Dendritic cell treated with granulocyte-macrophage colony-stimulating factor and Interleukin-4, amounts not matched to agents 40 ng/mL and 50 ng/mL, for 4 days (primary cell): ENCODE measurements at regions of chr9 and their contacts with region 1.

Region 1: DNA sequence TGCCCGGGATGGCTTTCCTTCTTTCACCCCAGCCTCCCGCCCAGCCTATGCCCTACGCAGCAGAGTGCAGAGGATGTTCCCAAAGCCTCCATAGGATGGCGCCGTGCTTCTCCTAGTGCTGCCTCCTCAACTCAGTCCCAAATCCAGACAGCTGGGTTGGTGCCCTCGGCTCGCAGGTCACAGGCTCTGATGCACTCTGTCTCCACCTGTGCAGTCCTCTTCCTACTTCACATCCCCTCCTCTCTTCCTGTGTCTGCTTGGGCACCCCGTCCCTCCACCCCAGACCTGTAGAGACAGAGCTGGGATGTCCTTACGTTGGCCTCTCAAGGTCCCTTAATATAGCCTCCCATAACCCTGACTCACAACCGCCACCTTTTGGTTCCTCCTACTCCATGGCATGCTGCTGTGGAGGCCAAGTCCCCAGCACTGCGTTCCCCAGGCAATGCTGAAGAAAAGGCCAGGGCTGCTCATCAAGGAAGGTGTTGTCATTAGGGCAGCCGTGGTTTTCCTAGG is 314.4 kb downstream of the GADD45G start:
- H3K4me3 Mint-ChIP-seq: no peak overlapping the region
- H3K27ac Mint-ChIP-seq: no peak overlapping the region
- H3K4me1 Mint-ChIP-seq: peaks cover 11% of the 10 kb centered on the region
- H3K27me3 Mint-ChIP-seq: peaks cover 20% of the 10 kb centered on the region

Region 2: DNA sequence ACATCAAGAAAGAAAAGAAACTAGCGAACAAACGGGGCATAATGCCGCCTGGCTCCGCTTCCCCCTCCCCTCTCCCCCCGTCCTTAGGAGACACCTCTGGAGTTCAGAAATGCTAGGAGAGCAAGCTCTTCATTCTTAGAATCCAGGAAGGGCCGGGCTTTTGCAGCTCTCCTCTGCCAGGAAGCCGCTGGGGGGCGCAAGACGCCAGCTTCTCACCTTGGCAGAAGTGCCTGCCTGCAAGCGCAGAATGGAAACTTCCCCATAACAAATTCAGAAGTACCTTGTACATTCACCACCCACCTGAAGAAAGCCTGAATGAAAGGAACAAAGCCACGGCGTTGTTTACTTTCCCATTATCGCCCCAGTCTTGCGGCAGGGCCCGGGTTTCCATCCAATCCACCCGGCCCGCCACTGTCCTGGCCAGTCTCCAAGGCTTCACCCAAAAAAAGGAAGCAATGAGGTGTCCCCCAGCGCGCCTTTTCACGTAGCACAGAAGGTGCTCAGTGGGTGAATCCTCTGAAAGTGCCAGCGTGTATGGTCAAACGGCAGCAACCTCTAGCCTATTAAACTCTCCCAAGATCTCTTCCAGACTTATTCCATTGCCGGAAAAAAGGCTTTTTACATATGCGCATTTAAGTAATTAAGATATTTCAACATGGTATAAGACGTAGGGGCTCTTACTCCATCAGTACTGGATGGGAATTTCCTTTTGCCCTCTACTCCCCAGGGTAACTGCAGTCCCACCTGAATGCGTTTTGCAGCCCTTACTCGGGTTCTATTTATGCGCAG is 316.1 kb before region 1 on chr9:
- intact Hi-C with region 1: loop called (anchors 1 kb)
- H3K4me3 Mint-ChIP-seq: peak overlapping the region; percentile 73
- H3K27ac Mint-ChIP-seq: peak overlapping the region; percentile 34
- H3K4me1 Mint-ChIP-seq: peaks cover 28% of the 10 kb centered on the region
- H3K27me3 Mint-ChIP-seq: peaks cover 11% of the 10 kb centered on the region

Region 3: GRCh38 chr9:89623925-89624420 is 295.3 kb before region 1 on chr9:
- intact Hi-C with region 1: loop called (anchors 5 kb)
- H3K4me3 Mint-ChIP-seq: no peak overlapping the region
- H3K27ac Mint-ChIP-seq: peak overlapping the region; percentile 81
- H3K4me1 Mint-ChIP-seq: peaks cover 44% of the 10 kb centered on the region
- H3K27me3 Mint-ChIP-seq: peaks cover 42% of the 10 kb centered on the region

Region 4: DNA sequence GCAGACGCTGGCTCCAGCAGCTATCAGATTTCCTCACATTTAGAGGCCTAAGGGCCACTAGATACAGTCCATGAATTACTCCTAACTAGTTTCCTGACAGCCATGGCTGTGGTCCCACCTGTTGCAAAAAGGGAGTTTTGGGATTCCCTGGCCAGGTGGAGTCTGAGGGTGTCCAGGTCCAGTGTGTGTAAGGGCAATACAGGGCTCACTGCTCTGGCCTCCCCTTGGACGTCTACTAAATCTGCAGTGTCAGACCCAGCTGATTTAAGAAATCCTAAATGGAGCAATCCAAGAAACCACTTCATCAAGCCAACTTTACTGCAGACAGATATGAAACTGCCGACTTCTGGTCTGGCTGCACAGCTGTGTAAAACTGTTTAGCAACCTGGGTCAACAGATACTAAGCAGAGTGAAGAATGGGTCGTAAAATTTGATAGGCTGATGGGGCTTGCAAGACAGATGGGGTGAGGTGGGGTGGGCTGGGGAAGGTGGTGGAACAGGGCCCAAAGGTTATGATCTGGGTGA is 198.0 kb before region 1 on chr9:
- intact Hi-C with region 1: no loop called
- H3K4me3 Mint-ChIP-seq: no peak overlapping the region
- H3K27ac Mint-ChIP-seq: peak overlapping the region; percentile 66
- H3K4me1 Mint-ChIP-seq: peaks cover 64% of the 10 kb centered on the region
- H3K27me3 Mint-ChIP-seq: no peaks in the 10 kb centered on the region